Transverse colon (tissue), 4 donors: ENCODE measurements at regions of chr5 and their contacts with region 1.

Region 1: GRCh38 chr5:134176511-134177368 is at the start of gene SKP1:
- DNase-seq: peak; percentile 87
- H3K4me3 ChIP-seq: peak within 1 kb of the TSS; percentile 68 to 96 (median 78)
- H3K27ac ChIP-seq: peak within 1 kb of the TSS; percentile 95 to 99 (median 98)
- H3K4me1 ChIP-seq: peaks cover 14 to 51% (median 33%) of the 10 kb centered on the region in 4 donors
- H3K27me3 ChIP-seq: no peaks in the 10 kb centered on the region
- CTCF ChIP-seq: no peak
- EP300 ChIP-seq: no peak
- POLR2A ChIP-seq: peak; percentile 100
- total RNA-seq, gene SKP1: 32.6 to 224 (median 170) TPM

Region 2: GRCh38 chr5:134555890-134556311 is 379.2 kb after region 1 on chr5:
- in situ Hi-C with region 1: loop called in 1 of 4 experiments (anchors 25 kb)
- intact Hi-C with region 1: no loop called
- DNase-seq: peak; percentile 39
- H3K4me3 ChIP-seq: no peak overlapping the region
- H3K27ac ChIP-seq: peak overlapping the region in 3 of 4 donors; percentile 33 to 60 (median 46)
- H3K4me1 ChIP-seq: peaks cover 15 to 26% (median 19%) of the 10 kb centered on the region in 4 donors
- H3K27me3 ChIP-seq: no peaks in the 10 kb centered on the region
- CTCF ChIP-seq: no peak
- EP300 ChIP-seq: no peak
- POLR2A ChIP-seq: no peak